Right ventricle myocardium superior (tissue), 1 donor: ENCODE measurements at regions of chr12 and their contacts with region 1.

Region 1: GRCh38 chr12:1650260-1650977 is 21.4 kb downstream of the WNT5B start:
- DNase-seq: no peak
- ATAC-seq: peak; percentile 87

Region 2: GRCh38 chr12:1791104-1791841 is 140.9 kb after region 1 on chr12:
- intact Hi-C with region 1: loop called (anchors 2 kb)
- DNase-seq: peak; percentile 71
- ATAC-seq: peak; percentile 54